ENCODE measurements at regions of chr3 and their contacts with region 1.

Region 1: DNA sequence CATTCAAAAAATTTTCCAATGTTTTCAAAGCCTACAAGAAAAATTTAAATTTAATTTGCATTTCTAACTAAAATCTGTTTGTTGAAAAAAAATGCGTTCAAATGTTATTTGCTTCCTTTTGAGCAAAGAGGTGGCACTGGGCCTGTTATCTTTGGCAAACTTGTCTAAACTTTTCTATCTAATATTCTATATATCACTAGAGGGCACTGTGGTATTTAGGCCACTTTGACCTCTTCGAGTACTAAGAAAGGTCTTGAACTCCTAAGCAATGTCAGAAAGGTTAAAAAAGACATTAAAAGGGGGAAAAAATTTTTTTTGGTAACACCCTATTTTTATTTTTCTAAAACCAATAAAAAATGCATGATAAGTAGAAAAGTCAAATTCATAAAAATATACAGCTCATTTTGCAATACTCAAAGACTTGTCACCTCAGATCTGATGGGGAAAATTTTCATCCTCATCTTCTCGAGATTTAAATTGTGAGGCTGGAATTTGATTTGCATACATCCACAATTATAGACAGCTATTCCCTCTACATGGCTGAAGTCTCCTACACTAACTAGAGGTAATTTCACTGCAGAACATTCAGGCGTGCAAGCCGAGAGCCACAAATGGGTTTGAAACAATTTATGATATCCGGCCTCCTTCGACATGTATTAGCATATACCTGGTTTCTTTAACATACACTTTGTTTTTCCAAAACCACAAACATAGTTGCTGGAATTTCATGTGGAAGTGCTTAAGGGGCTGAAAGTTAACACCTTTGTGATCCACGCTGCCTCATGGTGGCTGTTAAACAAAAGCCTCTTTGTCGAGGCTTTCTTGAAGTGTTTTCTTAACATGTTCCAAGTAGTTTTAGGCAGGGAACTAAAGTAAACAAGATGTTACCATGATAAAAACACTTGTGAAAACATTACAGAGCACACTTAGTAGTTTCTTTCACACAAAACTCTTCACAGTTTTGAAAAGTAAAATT is 576.4 kb downstream of the FOXP1 start:
- DNase-seq: no peak
- ATAC-seq: peak in 7 of 8 donors; percentile 48 to 82 (median 66)
- H3K4me3 ChIP-seq: no peak overlapping the region
- H3K27ac ChIP-seq: peak overlapping the region in 8 of 10 donors; percentile 16 to 59 (median 40)
- H3K4me1 ChIP-seq: peaks cover 3 to 86% (median 55%) of the 10 kb centered on the region in 9 donors
- H3K27me3 ChIP-seq: no peaks in the 10 kb centered on the region
- CTCF ChIP-seq: peak; percentile 10 to 76 (median 58)

Region 2: GRCh38 chr3:70789898-70790297 is 217.2 kb before region 1 on chr3:
- intact Hi-C with region 1: no loop called
- DNase-seq: no peak
- ATAC-seq: no peak
- H3K4me3 ChIP-seq: no peak overlapping the region
- H3K27ac ChIP-seq: no peak overlapping the region
- H3K4me1 ChIP-seq: no peaks in the 10 kb centered on the region
- H3K27me3 ChIP-seq: no peaks in the 10 kb centered on the region
- CTCF ChIP-seq: no peak

Region 3: DNA sequence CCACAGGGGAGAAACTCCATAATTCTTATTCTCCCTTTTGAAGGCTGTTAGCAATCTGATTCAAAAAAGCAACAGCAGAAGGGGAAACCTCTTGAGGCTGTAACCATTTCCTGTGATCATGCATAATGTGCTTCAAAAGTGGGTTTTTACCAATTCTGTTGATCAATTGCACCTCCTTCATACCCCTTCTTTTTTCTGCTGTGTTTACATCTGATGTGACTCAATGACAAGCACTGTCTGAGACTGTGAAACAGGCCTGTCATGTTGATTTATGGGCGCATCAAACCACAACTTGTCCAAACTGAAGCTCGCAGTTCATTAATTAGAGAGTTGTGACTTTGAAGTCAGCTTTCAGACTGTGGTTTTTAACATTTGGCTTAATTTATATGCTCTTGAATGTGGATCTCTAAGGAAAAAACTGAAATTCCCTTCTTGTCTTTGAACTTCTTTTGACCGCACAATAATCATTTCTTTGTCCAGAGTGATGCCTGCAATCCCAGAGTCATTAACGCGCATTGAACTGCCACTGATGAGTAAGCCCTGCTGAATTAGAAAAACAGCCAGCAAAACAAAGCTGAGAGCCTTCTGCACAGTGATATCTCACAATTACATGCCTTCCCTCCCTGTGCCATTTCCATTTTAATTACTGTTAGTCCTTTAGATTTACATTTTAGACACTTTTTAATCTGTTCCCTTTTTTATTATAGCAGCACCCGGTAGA is 43.6 kb after region 1 on chr3:
- intact Hi-C with region 1: loop called in 1 of 10 experiments (anchors 5 kb)
- DNase-seq: no peak
- ATAC-seq: no peak
- H3K4me3 ChIP-seq: no peak overlapping the region
- H3K27ac ChIP-seq: peak overlapping the region in 9 of 10 donors; percentile 18 to 96 (median 64)
- H3K4me1 ChIP-seq: peaks cover 21 to 100% (median 94%) of the 10 kb centered on the region in 9 donors
- H3K27me3 ChIP-seq: no peaks in the 10 kb centered on the region
- CTCF ChIP-seq: no peak

Region 4: GRCh38 chr3:71219744-71220638 is 212.9 kb after region 1 on chr3:
- intact Hi-C with region 1: no loop called
- DNase-seq: no peak
- ATAC-seq: no peak
- H3K4me3 ChIP-seq: no peak overlapping the region
- H3K27ac ChIP-seq: no peak overlapping the region
- H3K4me1 ChIP-seq: peaks cover 0 to 10% (median 5%) of the 10 kb centered on the region in 9 donors
- H3K27me3 ChIP-seq: no peaks in the 10 kb centered on the region
- CTCF ChIP-seq: no peak

Region 5: DNA sequence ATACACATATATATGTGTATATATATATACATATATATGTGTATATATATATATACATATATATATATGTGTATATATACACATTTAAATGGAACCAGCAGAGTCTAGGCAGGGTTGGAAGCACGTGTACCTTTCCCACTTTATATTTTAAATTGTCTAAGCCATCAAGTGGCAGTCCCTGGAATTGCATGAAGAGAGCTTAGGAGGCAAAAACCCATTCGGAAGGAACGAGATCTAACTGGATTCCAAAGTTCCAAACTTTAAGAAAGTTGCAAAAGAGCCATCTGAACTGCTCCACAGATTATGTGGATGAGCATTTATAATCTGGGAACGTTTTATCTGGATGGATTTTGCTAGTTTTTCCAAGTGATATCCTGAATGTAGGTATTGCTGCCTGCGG is 389.9 kb after region 1 on chr3:
- intact Hi-C with region 1: loop called in 1 of 10 experiments (anchors 10 kb)
- DNase-seq: peak in 1 of 2 donors; percentile 35
- ATAC-seq: no peak
- H3K4me3 ChIP-seq: no peak overlapping the region
- H3K27ac ChIP-seq: no peak overlapping the region
- H3K4me1 ChIP-seq: peaks cover 0 to 51% (median 20%) of the 10 kb centered on the region in 9 donors
- H3K27me3 ChIP-seq: no peaks in the 10 kb centered on the region
- CTCF ChIP-seq: peak; percentile 20 to 64 (median 53)

Measured in heart right ventricle (tissue), 16 donors.